MCF 10A (cell line): ENCODE measurements at regions of chr20 and their contacts with region 1.

Region 1: DNA sequence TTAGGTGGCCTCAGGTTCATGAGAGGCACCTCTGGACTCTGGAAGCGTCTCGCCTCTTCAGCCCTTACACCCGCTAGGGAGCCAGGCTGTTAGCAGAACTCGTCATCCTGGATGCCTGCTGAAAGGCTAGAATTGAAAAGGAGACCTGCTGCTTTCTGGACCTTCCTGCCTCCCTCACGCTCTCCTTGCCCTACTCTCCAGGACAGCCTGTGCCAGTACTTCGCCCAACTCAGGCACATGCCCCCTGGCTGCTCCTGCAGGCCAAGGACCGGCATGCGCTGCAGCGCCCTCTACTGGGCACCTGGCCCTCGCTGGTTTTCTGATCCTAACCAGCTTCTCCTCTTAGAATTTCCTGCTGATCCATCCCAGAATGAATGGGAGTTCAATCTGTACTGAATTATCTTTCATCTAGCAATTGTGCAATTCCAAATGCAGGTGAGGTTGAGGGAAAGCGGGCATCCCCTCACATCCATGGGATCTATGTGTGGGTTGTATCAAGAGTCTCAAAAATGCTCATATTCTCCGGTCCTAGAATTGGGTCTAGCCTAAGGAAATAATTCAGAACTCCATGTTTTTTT is 77.9 kb downstream of the PTPN1 start:
- DNase-seq: peak; percentile 81
- H3K4me3 Mint-ChIP-seq: peak overlapping the region; percentile 17
- H3K27ac Mint-ChIP-seq: peak overlapping the region; percentile 83
- H3K4me1 Mint-ChIP-seq: peaks cover 16% of the 10 kb centered on the region
- H3K27me3 Mint-ChIP-seq: no peaks in the 10 kb centered on the region
- CTCF ChIP-seq: peak; percentile 96

Region 2: DNA sequence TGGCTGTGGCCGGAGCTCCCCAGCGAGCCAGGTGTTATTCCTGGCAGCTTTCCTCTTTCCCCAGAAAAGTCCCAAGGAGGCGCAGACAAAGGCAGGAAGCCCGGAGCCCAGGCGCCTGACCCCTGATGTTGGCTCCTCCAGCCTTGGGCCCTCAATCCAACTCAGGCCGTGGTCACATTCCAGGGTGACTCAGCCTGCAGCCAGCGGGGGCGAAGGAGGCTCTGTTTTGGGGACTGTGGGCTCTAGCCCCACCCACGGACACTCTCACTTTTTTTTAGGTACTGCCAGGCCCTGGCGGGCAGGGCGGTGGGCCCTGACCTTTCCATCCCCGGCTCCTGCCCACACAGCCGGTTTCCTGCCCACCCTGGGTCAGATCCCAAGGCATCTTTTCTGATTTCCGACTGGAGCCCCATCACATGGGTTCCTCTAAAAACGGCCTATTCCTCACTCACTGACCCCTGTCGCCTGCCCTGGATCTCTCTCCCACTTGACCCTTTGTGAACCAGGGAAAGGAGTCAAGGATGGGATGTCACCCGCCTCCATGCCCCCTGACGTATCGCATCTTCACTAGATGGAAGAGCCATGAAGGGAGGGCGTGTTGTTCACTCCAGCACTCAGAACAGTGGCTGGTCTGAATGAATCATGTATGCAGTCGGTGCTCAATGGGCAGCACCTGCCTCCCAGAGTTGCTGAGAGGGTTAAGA is 1025.7 kb before region 1 on chr20:
- CTCF ChIA-PET with region 1: no interaction called
- POLR2A ChIA-PET with region 1: no interaction called
- intact Hi-C with region 1: no loop called
- DNase-seq: peak; percentile 92
- H3K4me3 Mint-ChIP-seq: no peak overlapping the region
- H3K27ac Mint-ChIP-seq: no peak overlapping the region
- H3K4me1 Mint-ChIP-seq: peaks cover 14% of the 10 kb centered on the region
- H3K27me3 Mint-ChIP-seq: peaks cover 28% of the 10 kb centered on the region
- CTCF ChIP-seq: no peak

Region 3: DNA sequence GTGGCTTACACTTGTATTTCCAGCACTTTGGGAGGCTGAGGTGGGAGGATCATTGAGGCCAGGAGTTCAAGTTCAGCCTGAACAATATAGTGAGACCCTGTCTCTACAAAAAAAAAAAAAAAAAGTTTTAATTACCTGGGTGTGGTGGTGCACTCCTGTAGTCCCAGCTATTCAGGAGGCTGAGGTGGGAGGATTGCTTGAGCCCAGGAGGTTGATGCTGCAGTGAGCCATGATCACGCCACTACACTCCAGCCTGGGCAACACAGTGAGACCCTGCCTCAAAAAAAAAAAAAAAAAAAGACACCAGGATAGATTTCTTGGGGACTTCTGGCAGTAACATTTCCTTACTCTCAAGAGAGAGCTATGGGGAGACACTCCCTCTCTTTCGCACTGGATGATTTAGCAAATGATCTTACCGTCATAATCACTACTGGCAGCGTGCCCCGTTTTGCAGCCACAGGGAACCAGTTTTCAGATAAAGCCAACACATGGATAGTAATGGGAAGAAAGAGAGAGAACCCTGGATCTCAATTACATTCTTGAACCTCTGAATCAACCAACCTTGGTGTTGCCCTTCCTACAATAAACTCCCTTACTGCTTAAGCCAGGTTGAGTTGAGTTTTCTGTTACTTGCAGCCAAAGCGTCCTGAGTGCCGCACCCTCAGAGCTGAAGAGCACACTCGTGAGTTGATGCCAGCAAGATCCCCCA is 96.0 kb before region 1 on chr20:
- CTCF ChIA-PET with region 1: interaction called, 5 read pairs
- POLR2A ChIA-PET with region 1: interaction called, 15 read pairs
- intact Hi-C with region 1: no loop called
- DNase-seq: peak; percentile 92
- H3K4me3 Mint-ChIP-seq: peak overlapping the region; percentile 60
- H3K27ac Mint-ChIP-seq: peak overlapping the region; percentile 92
- H3K4me1 Mint-ChIP-seq: peaks cover 39% of the 10 kb centered on the region
- H3K27me3 Mint-ChIP-seq: no peaks in the 10 kb centered on the region
- CTCF ChIP-seq: no peak

Region 4: DNA sequence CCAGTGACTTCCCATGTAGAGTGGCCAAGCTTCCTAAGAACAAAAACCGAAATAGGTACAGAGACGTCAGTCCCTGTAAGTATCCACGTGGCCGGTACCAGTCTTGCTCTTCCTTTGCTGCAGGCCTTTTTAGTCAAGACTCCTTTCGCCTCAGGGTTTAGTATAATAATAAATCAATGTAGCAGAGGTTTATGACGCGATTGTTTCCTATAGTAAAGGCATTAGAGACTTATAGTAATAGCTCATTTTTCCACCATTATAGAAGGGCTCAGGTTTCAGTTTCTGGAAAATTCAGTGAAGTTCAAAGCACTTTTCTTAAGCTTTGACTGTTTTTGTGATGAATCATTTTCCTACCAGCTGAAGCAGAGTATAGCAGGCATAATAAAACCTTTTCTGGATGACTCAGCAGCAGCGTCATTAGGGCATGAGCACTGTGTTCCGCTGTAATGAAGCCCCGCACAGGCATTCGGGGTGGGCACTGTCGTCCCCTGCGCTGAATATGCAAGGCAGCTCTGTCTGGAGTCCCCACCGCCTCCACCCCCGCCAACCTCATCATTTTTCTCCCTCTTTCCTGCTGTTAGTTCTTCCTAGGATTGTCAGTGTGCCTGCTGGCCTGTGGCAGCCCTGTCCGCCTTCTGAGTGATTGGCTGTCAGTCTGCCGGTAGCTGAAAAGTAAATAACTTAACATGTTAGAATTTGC is 26.6 kb before region 1 on chr20:
- CTCF ChIA-PET with region 1: interaction called, 7 read pairs
- POLR2A ChIA-PET with region 1: interaction called, 16 read pairs
- intact Hi-C with region 1: no loop called
- DNase-seq: peak; percentile 89
- H3K4me3 Mint-ChIP-seq: peak overlapping the region; percentile 55
- H3K27ac Mint-ChIP-seq: peak overlapping the region; percentile 97
- H3K4me1 Mint-ChIP-seq: peaks cover 47% of the 10 kb centered on the region
- H3K27me3 Mint-ChIP-seq: no peaks in the 10 kb centered on the region
- CTCF ChIP-seq: no peak

Region 5: GRCh38 chr20:50575847-50576720 is 12.0 kb before region 1 on chr20:
- CTCF ChIA-PET with region 1: interaction called, 27 read pairs
- POLR2A ChIA-PET with region 1: interaction called, 23 read pairs
- intact Hi-C with region 1: no loop called
- DNase-seq: peak; percentile 63
- H3K4me3 Mint-ChIP-seq: no peak overlapping the region
- H3K27ac Mint-ChIP-seq: no peak overlapping the region
- H3K4me1 Mint-ChIP-seq: peaks cover 21% of the 10 kb centered on the region
- H3K27me3 Mint-ChIP-seq: no peaks in the 10 kb centered on the region
- CTCF ChIP-seq: peak; percentile 56

Region 6: DNA sequence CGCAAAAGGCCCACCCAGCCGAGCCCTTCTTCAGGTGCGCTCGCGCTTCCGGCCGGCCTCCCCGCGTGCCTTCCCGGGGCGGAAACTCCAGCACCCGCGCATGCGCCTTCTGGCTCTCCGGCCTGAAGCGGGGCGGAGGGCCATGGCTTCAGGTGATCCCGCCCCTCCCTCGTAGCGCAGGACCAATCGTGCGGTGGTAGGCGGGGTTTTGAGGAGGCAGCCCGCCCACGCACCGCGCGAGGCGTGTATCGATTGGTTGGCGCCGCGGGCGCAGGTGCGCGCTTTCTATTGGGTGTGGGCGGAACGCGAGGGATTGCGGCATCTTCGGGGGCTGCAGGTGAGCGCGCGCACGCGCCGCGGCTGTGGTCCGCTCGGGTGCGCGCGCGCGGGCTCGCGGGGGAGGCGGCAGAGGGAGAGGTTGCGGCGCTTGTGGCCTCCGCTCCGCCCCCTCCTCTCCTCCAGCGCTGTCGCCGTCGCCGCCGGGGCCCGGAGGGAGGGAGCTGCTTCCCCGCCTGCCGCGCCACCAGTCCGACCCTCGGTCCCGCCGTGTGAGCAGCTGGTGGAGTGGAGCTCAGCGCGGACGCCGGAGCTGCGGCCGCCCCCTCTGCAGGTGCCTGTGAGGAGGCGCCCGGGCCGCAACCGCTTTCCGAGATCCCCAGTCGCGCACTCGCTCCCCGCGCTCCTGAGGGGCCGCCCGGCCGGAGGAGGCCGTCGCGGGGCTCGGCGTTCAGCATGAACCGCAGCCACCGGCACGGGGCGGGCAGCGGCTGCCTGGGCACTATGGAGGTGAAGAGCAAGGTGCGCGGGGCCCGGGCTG is 143.1 kb after region 1 on chr20 and contains the start of gene PARD6B:
- CTCF ChIA-PET with region 1: interaction called, 3 read pairs
- POLR2A ChIA-PET with region 1: interaction called, 18 read pairs
- intact Hi-C with region 1: no loop called
- DNase-seq: peak; percentile 99
- H3K4me3 Mint-ChIP-seq: peak within 1 kb of the TSS; percentile 77
- H3K27ac Mint-ChIP-seq: peak within 1 kb of the TSS; percentile 74
- H3K4me1 Mint-ChIP-seq: peaks cover 40% of the 10 kb centered on the region
- H3K27me3 Mint-ChIP-seq: no peaks in the 10 kb centered on the region
- CTCF ChIP-seq: no peak
- total RNA-seq, gene PARD6B: 5.3 and 5.8 TPM in 2 replicates

Region 7: DNA sequence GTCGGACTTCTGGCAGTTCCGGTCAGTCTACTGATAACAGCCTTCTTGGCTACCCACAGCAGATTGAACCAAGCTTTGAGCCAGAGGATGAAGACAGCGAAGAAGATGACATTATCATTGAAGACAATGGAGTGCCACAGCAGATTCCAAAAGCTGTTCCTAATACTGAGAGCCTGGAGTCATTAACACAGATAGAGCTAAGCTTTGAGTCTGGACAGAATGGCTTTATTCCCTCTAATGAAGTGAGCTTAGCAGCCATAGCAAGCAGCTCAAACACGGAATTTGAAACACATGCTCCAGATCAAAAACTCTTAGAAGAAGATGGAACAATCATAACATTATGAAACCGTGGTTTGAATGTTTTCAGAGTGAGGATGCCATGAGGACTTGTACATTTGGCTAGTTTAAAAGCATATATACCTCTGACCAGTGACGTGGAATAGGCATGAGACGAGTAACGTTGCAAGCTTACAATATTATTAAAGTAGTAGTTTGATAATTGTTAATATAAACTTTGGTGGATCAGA is 162.1 kb after region 1 on chr20:
- CTCF ChIA-PET with region 1: interaction called, 20 read pairs
- POLR2A ChIA-PET with region 1: interaction called, 14 read pairs
- intact Hi-C with region 1: loop called (anchors 2 kb)
- DNase-seq: no peak
- H3K4me3 Mint-ChIP-seq: no peak overlapping the region
- H3K27ac Mint-ChIP-seq: no peak overlapping the region
- H3K4me1 Mint-ChIP-seq: no peaks in the 10 kb centered on the region
- H3K27me3 Mint-ChIP-seq: no peaks in the 10 kb centered on the region
- CTCF ChIP-seq: no peak

Region 8: GRCh38 chr20:51220293-51220706 is 632.2 kb after region 1 on chr20:
- CTCF ChIA-PET with region 1: no interaction called
- POLR2A ChIA-PET with region 1: no interaction called
- intact Hi-C with region 1: no loop called
- DNase-seq: peak; percentile 22
- H3K4me3 Mint-ChIP-seq: no peak overlapping the region
- H3K27ac Mint-ChIP-seq: no peak overlapping the region
- H3K4me1 Mint-ChIP-seq: peaks cover 14% of the 10 kb centered on the region
- H3K27me3 Mint-ChIP-seq: no peaks in the 10 kb centered on the region
- CTCF ChIP-seq: peak; percentile 57